AG04450 (cell line): ENCODE measurements at regions of chr15 and their contacts with region 1.

Region 1: DNA sequence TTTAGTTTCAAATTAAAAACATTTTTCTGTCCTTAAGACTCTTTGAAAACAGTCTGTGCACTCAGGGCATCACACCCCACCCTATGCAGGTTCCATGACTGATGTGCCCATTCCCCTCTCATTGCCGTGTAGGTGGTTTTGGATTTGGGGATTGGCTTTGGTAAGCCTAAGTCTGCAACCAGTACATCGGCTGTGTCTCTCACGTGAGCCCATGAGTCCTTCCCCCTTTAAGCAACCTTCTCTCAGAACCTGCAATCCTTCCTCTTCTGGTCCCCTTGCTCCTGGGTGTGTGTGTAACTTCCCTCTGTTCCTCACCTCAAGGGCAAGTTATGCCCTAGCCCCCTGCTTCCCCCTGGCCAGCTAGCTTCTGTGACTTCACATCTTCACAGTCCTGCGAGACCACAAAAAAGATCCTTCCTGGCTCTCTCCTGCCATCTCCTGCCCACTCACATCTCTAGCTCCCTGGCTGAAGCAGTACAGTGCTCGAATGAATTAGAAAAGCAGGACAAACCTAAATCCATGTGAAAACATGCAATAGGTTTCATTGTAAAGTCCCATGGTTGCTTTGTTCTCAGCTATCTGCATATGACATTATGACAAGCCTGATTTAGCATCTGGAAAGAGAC is 126.7 kb downstream of the UACA start:
- DNase-seq: no peak
- H3K4me3 ChIP-seq: no peak overlapping the region
- H3K27ac ChIP-seq: no peak overlapping the region
- H3K27me3 ChIP-seq: no peaks in the 10 kb centered on the region
- CTCF ChIP-seq: peak; percentile 51

Region 2: GRCh38 chr15:70569091-70569621 is 67.5 kb before region 1 on chr15:
- CTCF ChIA-PET with region 1: interaction called, 11 read pairs
- POLR2A ChIA-PET with region 1: no interaction called
- DNase-seq: peak; percentile 38
- H3K4me3 ChIP-seq: no peak overlapping the region
- H3K27ac ChIP-seq: peak overlapping the region; percentile 35
- H3K27me3 ChIP-seq: peaks cover 6% of the 10 kb centered on the region
- CTCF ChIP-seq: peak; percentile 71